ENCODE measurements at regions of chr2 and their contacts with region 1.

Region 1: DNA sequence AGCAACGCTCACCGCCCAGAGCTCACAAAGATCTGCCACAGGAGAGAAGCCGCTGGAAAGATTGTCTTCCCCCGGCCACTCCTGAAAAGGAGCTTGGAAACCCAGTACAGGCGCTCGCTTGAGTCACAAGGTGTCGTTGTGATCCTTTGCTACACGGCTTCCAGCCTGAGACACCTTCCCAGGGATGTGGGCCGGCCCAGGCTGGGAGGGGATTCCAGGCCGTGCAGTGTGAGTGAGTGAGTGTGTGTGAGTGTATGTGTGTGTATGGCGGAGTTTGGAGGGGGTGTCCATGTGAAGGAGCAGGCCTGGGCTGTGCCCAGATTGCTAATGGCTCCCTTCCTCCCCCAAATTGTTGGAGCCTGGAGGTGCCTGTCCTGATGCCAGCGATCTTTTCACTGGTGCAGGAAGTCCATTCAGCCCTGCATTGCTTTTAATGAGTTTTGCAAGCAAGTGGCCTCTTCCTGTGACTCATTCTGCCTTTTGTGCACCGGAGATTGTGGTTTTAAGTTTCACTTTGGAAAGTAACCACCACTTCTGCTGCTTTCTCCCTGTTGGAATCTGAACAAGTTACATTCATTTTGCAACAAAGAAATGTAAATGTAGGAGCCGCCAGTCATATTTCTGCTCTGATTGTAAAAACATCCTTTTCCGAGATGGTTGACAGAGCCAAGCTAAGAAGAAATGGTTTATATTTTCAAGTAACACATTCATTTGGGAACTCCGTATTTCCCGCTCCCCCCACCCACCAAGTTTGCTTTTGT is 83.7 kb downstream of the LPIN1 start:
- DNase-seq: peak; percentile 99
- H3K4me3 ChIP-seq: peak overlapping the region; percentile 37
- H3K27ac ChIP-seq: peak overlapping the region; percentile 99
- H3K4me1 ChIP-seq: peaks cover 42% of the 10 kb centered on the region
- H3K27me3 ChIP-seq: no peaks in the 10 kb centered on the region
- CTCF ChIP-seq: peak; percentile 67

Region 2: DNA sequence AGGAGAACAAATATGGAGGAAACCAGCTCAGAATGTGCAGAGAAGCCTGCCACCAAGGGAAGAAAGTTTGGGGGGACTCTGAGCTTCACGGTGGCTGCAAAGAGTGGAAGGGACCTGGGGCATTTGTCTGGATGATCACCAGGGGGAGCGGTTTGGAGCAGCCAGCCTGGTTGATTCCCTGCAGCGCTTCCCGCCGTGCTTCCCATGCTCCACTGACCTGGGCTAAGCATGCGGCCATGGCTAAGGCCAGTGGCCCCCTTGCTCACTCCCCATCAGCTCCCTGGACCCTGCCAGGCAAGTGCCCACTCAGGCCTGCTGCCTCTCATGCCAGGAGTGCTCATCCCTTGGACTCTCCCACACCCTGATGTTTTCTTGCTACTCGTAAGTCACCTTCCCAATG is 187.2 kb before region 1 on chr2:
- CTCF ChIA-PET with region 1: no interaction called
- POLR2A ChIA-PET with region 1: no interaction called
- intact Hi-C with region 1: no loop called
- DNase-seq: no peak
- H3K4me3 ChIP-seq: no peak overlapping the region
- H3K27ac ChIP-seq: no peak overlapping the region
- H3K4me1 ChIP-seq: no peaks in the 10 kb centered on the region
- H3K27me3 ChIP-seq: no peaks in the 10 kb centered on the region
- CTCF ChIP-seq: no peak

Region 3: GRCh38 chr2:11980809-11981208 is 150.7 kb after region 1 on chr2:
- CTCF ChIA-PET with region 1: no interaction called
- POLR2A ChIA-PET with region 1: no interaction called
- intact Hi-C with region 1: no loop called
- DNase-seq: no peak
- H3K4me3 ChIP-seq: no peak overlapping the region
- H3K27ac ChIP-seq: no peak overlapping the region
- H3K4me1 ChIP-seq: no peaks in the 10 kb centered on the region
- H3K27me3 ChIP-seq: no peaks in the 10 kb centered on the region
- CTCF ChIP-seq: no peak

Region 4: GRCh38 chr2:12057436-12058166 is 227.5 kb after region 1 on chr2:
- CTCF ChIA-PET with region 1: no interaction called
- POLR2A ChIA-PET with region 1: no interaction called
- intact Hi-C with region 1: loop called (anchors 2 kb)
- DNase-seq: peak; percentile 93
- H3K4me3 ChIP-seq: no peak overlapping the region
- H3K27ac ChIP-seq: peak overlapping the region; percentile 56
- H3K4me1 ChIP-seq: peaks cover 53% of the 10 kb centered on the region
- H3K27me3 ChIP-seq: no peaks in the 10 kb centered on the region
- CTCF ChIP-seq: no peak

Region 5: DNA sequence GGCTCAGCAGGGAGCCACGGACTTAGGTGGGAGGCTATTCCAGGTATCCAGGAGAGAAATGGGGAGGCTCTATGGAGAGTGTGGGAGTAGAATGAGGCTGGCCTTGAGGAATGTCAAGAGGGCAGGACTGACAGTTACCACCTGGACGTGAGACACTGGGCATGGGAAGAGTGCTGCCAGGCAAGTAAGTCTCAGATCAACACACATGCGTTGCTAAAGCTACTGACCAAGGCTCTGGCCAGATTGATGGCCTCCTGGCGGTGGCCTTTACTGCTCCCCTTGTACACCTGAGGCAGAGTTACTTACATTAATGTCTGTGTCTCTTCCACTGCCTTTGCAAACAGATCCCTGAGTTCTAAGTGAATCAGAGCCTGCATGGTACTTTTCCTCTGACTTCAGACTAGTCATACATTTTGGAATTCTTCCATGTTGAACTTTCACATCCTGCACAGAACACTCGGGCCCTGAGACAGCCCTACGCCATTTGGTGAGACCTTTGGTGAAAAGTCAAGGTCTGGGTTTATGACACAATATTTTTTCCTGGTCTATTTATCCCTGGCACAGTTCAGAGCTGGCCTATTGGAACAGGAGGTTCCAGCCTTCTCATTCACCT is 487.8 kb after region 1 on chr2:
- CTCF ChIA-PET with region 1: no interaction called
- POLR2A ChIA-PET with region 1: no interaction called
- intact Hi-C with region 1: loop called (anchors 10 kb)
- DNase-seq: peak; percentile 17
- H3K4me3 ChIP-seq: no peak overlapping the region
- H3K27ac ChIP-seq: no peak overlapping the region
- H3K4me1 ChIP-seq: peaks cover 24% of the 10 kb centered on the region
- H3K27me3 ChIP-seq: no peaks in the 10 kb centered on the region
- CTCF ChIP-seq: no peak

Region 6: DNA sequence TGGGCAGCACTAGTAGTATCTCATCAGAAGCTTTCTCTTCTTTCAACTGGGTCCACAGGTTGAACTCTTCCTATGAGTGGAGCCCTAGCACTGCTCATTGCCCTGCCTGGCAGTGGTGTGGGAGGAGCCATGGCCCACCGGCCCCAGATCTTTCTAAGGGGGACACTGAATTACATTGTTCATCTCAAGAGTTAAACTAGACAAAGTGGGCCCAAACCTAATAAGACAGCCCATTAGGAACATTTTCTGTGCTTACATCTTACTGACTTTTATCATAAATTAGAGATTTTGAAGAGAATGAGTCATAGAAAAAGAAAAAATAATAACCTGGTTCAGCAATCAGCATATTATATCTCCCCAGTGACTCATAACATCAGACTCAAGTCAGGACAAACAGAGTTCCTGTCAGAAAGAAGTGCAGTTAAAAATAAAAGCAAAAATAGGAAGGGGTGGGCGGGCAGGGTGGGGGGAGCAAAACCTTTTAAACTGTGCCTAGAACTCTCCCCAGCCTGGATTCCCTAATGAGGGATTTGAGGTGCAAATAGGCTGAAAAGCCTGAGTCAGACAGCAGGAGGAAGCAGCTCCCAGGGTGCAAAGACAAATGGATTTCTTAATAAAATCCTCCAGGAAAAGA is 725.0 kb after region 1 on chr2:
- CTCF ChIA-PET with region 1: no interaction called
- POLR2A ChIA-PET with region 1: no interaction called
- intact Hi-C with region 1: loop called (anchors 2 kb)
- DNase-seq: peak; percentile 94
- H3K4me3 ChIP-seq: no peak overlapping the region
- H3K27ac ChIP-seq: peak overlapping the region; percentile 75
- H3K4me1 ChIP-seq: peaks cover 28% of the 10 kb centered on the region
- H3K27me3 ChIP-seq: no peaks in the 10 kb centered on the region
- CTCF ChIP-seq: peak; percentile 32; the same call in 1 of the 2 replicates

Region 7: GRCh38 chr2:12931186-12931844 is 1101.2 kb after region 1 on chr2:
- CTCF ChIA-PET with region 1: no interaction called
- POLR2A ChIA-PET with region 1: no interaction called
- intact Hi-C with region 1: loop called (anchors 2 kb)
- DNase-seq: peak; percentile 72
- H3K4me3 ChIP-seq: no peak overlapping the region
- H3K27ac ChIP-seq: no peak overlapping the region
- H3K4me1 ChIP-seq: peaks cover 33% of the 10 kb centered on the region
- H3K27me3 ChIP-seq: no peaks in the 10 kb centered on the region
- CTCF ChIP-seq: peak; percentile 94

Measured in A673 (cell line).